HCT116 (cell line): ENCODE measurements at regions of chr16 and their contacts with region 1.

Region 1: DNA sequence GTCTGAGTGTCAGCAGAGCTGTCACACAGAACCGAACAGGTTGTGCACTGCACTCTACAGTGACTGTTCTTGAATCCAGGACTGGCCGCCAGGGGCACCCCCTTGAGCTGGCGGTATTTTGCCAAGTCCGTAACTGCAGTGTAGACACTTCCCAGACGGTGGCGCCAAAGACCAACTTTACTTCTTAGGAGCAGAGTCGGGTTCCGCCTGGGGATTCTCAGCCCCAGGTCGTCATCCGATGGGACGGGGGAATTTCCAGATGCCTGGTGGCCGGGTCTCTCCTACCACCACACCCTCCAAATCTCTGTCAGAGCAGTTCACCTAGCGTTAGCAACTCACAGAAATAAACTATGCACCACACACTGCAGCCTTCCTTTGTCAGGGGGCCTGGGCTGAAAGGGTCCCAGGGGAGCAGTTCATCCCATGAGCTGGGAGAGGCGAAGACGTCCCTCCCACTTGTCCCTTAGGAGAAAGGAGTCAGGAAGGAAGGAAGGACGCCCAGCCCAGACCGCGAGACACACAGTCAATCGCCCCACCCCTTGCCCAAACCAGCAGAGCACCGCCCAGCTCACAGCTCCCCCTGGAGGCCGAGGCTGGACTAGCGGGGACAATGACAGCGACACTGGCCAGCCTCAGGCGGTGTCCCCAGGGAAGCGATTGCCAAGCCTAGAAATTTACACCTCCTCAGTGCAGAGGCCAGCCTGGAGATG is 7.4 kb upstream of the RIPOR1 start:
- DNase-seq: peak; percentile 93
- ATAC-seq: peak; percentile 91
- H3K4me3 ChIP-seq: peak overlapping the region; percentile 32 to 60
- H3K27ac ChIP-seq: peak overlapping the region; percentile 64
- H3K4me1 ChIP-seq: peaks cover 0 to 29% of the 10 kb centered on the region in 2 experiments; a peak in 2 of 4 replicates
- H3K27me3 ChIP-seq: no peaks in the 10 kb centered on the region
- CTCF ChIP-seq: peak; percentile 84 to 99 (median 99)
- POLR2A ChIP-seq: no peak
- RAD21 ChIP-seq: peak; percentile 95

Region 2: GRCh38 chr16:67480833-67481560 is 40.3 kb before region 1 on chr16 and contains the start of gene ATP6V0D1:
- CTCF ChIA-PET with region 1: interaction called, 29 read pairs
- POLR2A ChIA-PET with region 1: no interaction called
- RAD21 ChIA-PET with region 1: no interaction called
- intact Hi-C with region 1: no loop called
- DNase-seq: peak; percentile 94
- ATAC-seq: peak; percentile 91
- H3K4me3 ChIP-seq: peak within 1 kb of the TSS; percentile 93 to 94
- H3K27ac ChIP-seq: peak within 1 kb of the TSS; percentile 51
- H3K4me1 ChIP-seq: peaks cover 12 to 20% of the 10 kb centered on the region in 2 experiments
- H3K27me3 ChIP-seq: no peaks in the 10 kb centered on the region
- CTCF ChIP-seq: peak; percentile 77 to 88 (median 86)
- POLR2A ChIP-seq: no peak
- RAD21 ChIP-seq: peak; percentile 72
- total RNA-seq, gene ATP6V0D1: 36.6 TPM

Region 3: GRCh38 chr16:67509016-67509415 is 12.2 kb before region 1 on chr16:
- CTCF ChIA-PET with region 1: interaction called, 19 read pairs
- POLR2A ChIA-PET with region 1: no interaction called
- RAD21 ChIA-PET with region 1: no interaction called
- intact Hi-C with region 1: no loop called
- DNase-seq: no peak
- ATAC-seq: no peak
- H3K4me3 ChIP-seq: no peak overlapping the region
- H3K27ac ChIP-seq: no peak overlapping the region
- H3K4me1 ChIP-seq: peaks cover 5 to 17% of the 10 kb centered on the region in 2 experiments; a peak in 3 of 4 replicates
- H3K27me3 ChIP-seq: no peaks in the 10 kb centered on the region
- CTCF ChIP-seq: no peak
- POLR2A ChIP-seq: no peak
- RAD21 ChIP-seq: no peak

Region 4: GRCh38 chr16:67561824-67562525 is 40.7 kb after region 1 on chr16:
- CTCF ChIA-PET with region 1: interaction called, 29 read pairs
- POLR2A ChIA-PET with region 1: interaction called, 4 read pairs
- RAD21 ChIA-PET with region 1: interaction called in 1 of 2 experiments, 4 read pairs
- intact Hi-C with region 1: loop called (anchors 1 kb)
- DNase-seq: peak; percentile 92
- ATAC-seq: peak; percentile 86
- H3K4me3 ChIP-seq: peak overlapping the region; percentile 88 to 99
- H3K27ac ChIP-seq: peak overlapping the region; percentile 100
- H3K4me1 ChIP-seq: peaks cover 18 to 26% of the 10 kb centered on the region in 2 experiments
- H3K27me3 ChIP-seq: no peaks in the 10 kb centered on the region
- CTCF ChIP-seq: no peak
- POLR2A ChIP-seq: peak; percentile 22
- RAD21 ChIP-seq: no peak

Region 5: DNA sequence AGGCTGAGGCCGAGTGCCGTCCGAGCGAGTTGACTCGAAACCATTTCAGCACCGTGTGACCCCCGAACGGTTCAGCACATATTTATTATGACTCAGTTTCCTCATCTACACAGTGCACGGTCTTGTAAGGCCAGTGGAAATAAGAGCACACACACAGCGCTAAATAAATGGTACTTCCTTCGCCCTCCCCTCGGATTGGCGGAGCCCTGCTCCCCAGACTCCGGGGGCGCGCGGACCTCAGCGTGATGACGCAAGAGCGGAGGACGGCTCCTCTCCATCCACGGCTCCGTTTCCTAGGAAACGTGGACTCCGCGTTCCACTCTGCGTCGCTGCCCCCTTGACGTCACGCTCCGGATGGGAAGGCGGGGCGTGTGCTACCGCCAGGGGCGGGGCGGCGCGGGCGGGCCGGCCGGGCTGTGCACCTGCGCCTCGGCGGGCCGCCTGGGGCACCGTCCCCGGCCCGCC is 139.3 kb after region 1 on chr16 and contains the start of gene PARD6A:
- CTCF ChIA-PET with region 1: interaction called, 23 read pairs
- POLR2A ChIA-PET with region 1: interaction called, 5 read pairs
- RAD21 ChIA-PET with region 1: no interaction called
- intact Hi-C with region 1: no loop called
- DNase-seq: peak; percentile 94
- ATAC-seq: peak; percentile 82
- H3K4me3 ChIP-seq: peak within 1 kb of the TSS; percentile 87 to 90
- H3K27ac ChIP-seq: peak within 1 kb of the TSS; percentile 87
- H3K4me1 ChIP-seq: peaks cover 6 to 30% of the 10 kb centered on the region in 2 experiments; a peak in 3 of 4 replicates
- H3K27me3 ChIP-seq: no peaks in the 10 kb centered on the region
- CTCF ChIP-seq: no peak
- POLR2A ChIP-seq: peak; percentile 44
- RAD21 ChIP-seq: no peak
- total RNA-seq, gene PARD6A: 5.6 TPM

Region 6: GRCh38 chr16:67672739-67673662 is 151.8 kb after region 1 on chr16:
- CTCF ChIA-PET with region 1: interaction called, 22 read pairs
- POLR2A ChIA-PET with region 1: no interaction called
- RAD21 ChIA-PET with region 1: no interaction called
- intact Hi-C with region 1: loop called (anchors 1 kb)
- DNase-seq: peak; percentile 42
- ATAC-seq: peak; percentile 63
- H3K4me3 ChIP-seq: no peak overlapping the region
- H3K27ac ChIP-seq: no peak overlapping the region
- H3K4me1 ChIP-seq: peaks cover 0 to 10% of the 10 kb centered on the region in 2 experiments; a peak in 2 of 4 replicates
- H3K27me3 ChIP-seq: no peaks in the 10 kb centered on the region
- CTCF ChIP-seq: peak; percentile 78 to 92 (median 90); a peak in 5 of 6 replicates
- POLR2A ChIP-seq: no peak
- RAD21 ChIP-seq: peak; percentile 93

Region 7: DNA sequence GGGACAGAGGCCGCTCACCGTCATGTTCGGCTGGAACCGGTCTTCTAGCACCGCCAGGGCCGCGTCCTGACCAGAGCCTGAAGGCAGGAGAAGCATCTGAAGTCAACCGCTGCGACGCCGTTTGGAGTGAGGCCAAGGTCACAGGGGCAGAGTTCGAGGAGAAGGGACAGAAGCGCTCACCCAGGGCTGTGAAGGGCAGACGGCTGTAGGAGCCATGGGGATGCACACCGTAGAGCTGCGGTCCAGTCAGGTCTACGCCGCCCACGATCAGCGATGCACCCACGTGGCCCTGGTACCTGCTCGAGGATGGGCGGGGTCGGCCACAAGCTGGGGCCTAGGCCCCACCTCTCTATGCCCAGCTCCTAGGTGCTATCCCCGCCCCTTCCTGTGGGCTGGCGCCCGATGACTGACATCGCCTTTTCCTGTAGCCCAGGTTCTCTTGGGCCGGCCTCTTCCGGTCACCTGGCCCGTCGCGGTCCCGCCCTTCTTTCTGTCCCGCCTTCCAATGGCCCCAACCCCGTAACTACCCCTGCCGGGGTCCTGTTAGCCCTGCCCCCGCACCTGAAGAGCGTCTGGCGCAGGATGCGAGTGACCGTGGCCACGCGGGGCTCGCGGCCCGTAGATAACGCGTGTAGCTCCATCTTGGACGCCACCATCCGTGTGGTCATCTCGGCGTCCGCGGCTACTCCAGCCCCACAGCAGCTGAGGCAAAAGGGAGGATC is 414.3 kb after region 1 on chr16:
- CTCF ChIA-PET with region 1: interaction called, 10 read pairs
- POLR2A ChIA-PET with region 1: no interaction called
- RAD21 ChIA-PET with region 1: interaction called in 1 of 2 experiments, 9 read pairs
- intact Hi-C with region 1: loop called (anchors 10 kb)
- DNase-seq: peak; percentile 93
- ATAC-seq: peak; percentile 95
- H3K4me3 ChIP-seq: peak overlapping the region; percentile 70 to 82
- H3K27ac ChIP-seq: peak overlapping the region; percentile 83
- H3K4me1 ChIP-seq: peaks cover 3 to 30% of the 10 kb centered on the region in 2 experiments; a peak in 3 of 4 replicates
- H3K27me3 ChIP-seq: no peaks in the 10 kb centered on the region
- CTCF ChIP-seq: no peak
- POLR2A ChIP-seq: peak; percentile 67
- RAD21 ChIP-seq: no peak